GM13976 (cell line): ENCODE measurements at regions of chr6 and their contacts with region 1.

Region 1: GRCh38 chr6:152124429-152125074 is 317.1 kb downstream of the ESR1 start:
- DNase-seq: peak; percentile 62
- CTCF ChIP-seq: peak; percentile 55

Region 2: GRCh38 chr6:151675746-151676416 is 448.7 kb before region 1 on chr6:
- in situ Hi-C with region 1: loop called (anchors 25 kb)
- DNase-seq: peak; percentile 74
- CTCF ChIP-seq: peak; percentile 91